Dorsolateral prefrontal cortex (tissue), 120 donors: ENCODE measurements at regions of chr7 and their contacts with region 1.

Region 1: GRCh38 chr7:76008156-76008687 is 13.8 kb upstream of the TMEM120A start:
- DNase-seq: no peak
- H3K4me3 ChIP-seq: no peak overlapping the region
- H3K27ac ChIP-seq: peak overlapping the region in 14 of 59 donors; percentile 5 to 60 (median 32)
- H3K27me3 ChIP-seq: no peaks in the 10 kb centered on the region
- CTCF ChIP-seq: no peak

Region 2: GRCh38 chr7:75971961-75972763 is 36.1 kb before region 1 on chr7:
- intact Hi-C with region 1: loop called in 1 of 2 experiments (anchors 1 kb)
- DNase-seq: no peak
- H3K4me3 ChIP-seq: no peak overlapping the region
- H3K27ac ChIP-seq: no peak overlapping the region
- H3K27me3 ChIP-seq: no peaks in the 10 kb centered on the region
- CTCF ChIP-seq: no peak